HepG2 (cell line): ENCODE measurements at regions of chr5 and their contacts with region 1.

Region 1: GRCh38 chr5:180328296-180329137 is 24.6 kb downstream of the GFPT2 start:
- DNase-seq: peak; percentile 74
- ATAC-seq: peak; percentile 89
- H3K4me3 ChIP-seq: no peak overlapping the region
- H3K27ac ChIP-seq: no peak overlapping the region
- H3K4me1 ChIP-seq: 0 out of 2 replicates have a peak, but pooled peaks cover 8% of the 10 kb centered on the region
- H3K27me3 ChIP-seq: peaks cover 3 to 25% of the 10 kb centered on the region in 2 experiments; a peak in 4 of 5 replicates
- CTCF ChIP-seq: peak; percentile 91
- EP300 ChIP-seq: no peak
- POLR2A ChIP-seq: no peak
- RAD21 ChIP-seq: peak; percentile 61; the same call in 1 of the 2 replicates

Region 2: DNA sequence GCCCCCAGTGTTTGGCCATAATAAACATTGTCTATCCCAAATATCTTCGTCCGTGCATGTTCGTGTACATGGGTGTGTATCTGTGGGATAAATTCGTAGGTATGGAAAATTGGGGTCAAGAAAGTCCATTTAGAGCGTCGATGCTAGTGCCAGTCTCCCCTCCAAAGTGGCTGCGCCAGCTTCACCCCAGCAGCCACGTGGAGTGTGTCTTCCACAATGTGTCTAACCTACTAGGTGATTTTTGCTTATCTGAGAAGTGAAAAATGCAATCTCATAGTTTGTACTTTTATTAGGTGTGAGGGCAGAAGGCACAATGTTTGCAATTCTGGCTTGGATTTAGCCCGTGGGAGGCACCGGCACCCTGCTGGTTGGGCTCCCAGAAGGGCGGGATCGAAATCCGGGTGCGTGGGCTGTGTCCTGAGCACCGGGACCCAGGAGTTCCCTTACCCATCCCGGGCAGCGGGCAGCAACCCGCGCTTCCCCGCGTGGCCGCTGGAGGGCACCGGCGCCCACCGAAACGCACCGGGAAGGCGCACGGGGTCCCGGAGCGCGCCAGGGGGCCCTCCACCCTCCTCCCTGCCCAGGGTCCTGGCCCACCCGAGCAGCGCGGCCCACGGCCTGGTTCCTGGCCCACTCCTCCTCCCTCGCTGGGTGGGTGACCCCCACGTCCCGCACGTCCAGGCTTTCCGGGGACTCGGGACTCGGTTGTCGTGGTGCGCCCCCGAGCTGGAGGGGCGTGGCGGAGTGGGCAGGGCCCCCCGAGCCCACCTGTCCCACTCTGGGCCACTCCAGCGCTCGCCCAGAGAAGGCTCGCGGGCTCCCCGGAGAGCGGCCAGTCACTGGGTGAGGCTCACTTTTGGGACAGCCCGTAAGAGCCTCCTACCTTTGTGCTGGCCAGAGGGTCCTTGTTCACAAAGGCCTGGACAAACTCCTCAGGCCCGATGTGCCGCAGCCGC is 201.5 kb before region 1 on chr5:
- CTCF ChIA-PET with region 1: no interaction called
- POLR2A ChIA-PET with region 1: no interaction called
- in situ Hi-C with region 1: no loop called
- intact Hi-C with region 1: loop called (anchors 10 kb)
- DNase-seq: no peak
- ATAC-seq: peak; percentile 79
- H3K4me3 ChIP-seq: peak overlapping the region in 1 of 3 experiments; percentile 16; a peak in 1 of 6 replicates
- H3K27ac ChIP-seq: no peak overlapping the region
- H3K4me1 ChIP-seq: no peaks in the 10 kb centered on the region
- H3K27me3 ChIP-seq: peaks cover 8 to 56% of the 10 kb centered on the region in 2 experiments
- CTCF ChIP-seq: peak; percentile 91
- EP300 ChIP-seq: no peak
- POLR2A ChIP-seq: no peak
- RAD21 ChIP-seq: peak; percentile 82

Region 3: GRCh38 chr5:180201051-180201987 is 127.2 kb before region 1 on chr5:
- CTCF ChIA-PET with region 1: no interaction called
- POLR2A ChIA-PET with region 1: no interaction called
- in situ Hi-C with region 1: loop called (anchors 10 kb)
- intact Hi-C with region 1: loop called (anchors 5 kb)
- DNase-seq: peak; percentile 15
- ATAC-seq: peak; percentile 50; the same call in 2 of the 3 replicates
- H3K4me3 ChIP-seq: no peak overlapping the region
- H3K27ac ChIP-seq: no peak overlapping the region
- H3K4me1 ChIP-seq: no peaks in the 10 kb centered on the region
- H3K27me3 ChIP-seq: peaks cover 0 to 22% of the 10 kb centered on the region in 2 experiments; a peak in 3 of 5 replicates
- CTCF ChIP-seq: peak; percentile 77
- EP300 ChIP-seq: no peak
- POLR2A ChIP-seq: no peak
- RAD21 ChIP-seq: peak; percentile 25; the same call in 1 of the 2 replicates

Region 4: GRCh38 chr5:180209137-180209581 is 119.4 kb before region 1 on chr5 and contains the start of gene RASGEF1C:
- CTCF ChIA-PET with region 1: no interaction called
- POLR2A ChIA-PET with region 1: no interaction called
- in situ Hi-C with region 1: loop called (anchors 10 kb)
- intact Hi-C with region 1: loop called (anchors 5 kb)
- DNase-seq: peak; percentile 16
- ATAC-seq: peak; percentile 86
- H3K4me3 ChIP-seq: peak within 1 kb of the TSS; percentile 21 to 61 (median 50); a peak in 4 of 6 replicates
- H3K27ac ChIP-seq: no peak within 1 kb of the TSS
- H3K4me1 ChIP-seq: peaks cover 11% of the 10 kb centered on the region
- H3K27me3 ChIP-seq: peaks cover 0 to 22% of the 10 kb centered on the region in 2 experiments; a peak in 3 of 5 replicates
- CTCF ChIP-seq: peak; percentile 48; the same call in 1 of the 2 replicates
- EP300 ChIP-seq: no peak
- POLR2A ChIP-seq: no peak
- RAD21 ChIP-seq: peak; percentile 79
- total RNA-seq, gene RASGEF1C: not detected in 2 replicates

Region 5: DNA sequence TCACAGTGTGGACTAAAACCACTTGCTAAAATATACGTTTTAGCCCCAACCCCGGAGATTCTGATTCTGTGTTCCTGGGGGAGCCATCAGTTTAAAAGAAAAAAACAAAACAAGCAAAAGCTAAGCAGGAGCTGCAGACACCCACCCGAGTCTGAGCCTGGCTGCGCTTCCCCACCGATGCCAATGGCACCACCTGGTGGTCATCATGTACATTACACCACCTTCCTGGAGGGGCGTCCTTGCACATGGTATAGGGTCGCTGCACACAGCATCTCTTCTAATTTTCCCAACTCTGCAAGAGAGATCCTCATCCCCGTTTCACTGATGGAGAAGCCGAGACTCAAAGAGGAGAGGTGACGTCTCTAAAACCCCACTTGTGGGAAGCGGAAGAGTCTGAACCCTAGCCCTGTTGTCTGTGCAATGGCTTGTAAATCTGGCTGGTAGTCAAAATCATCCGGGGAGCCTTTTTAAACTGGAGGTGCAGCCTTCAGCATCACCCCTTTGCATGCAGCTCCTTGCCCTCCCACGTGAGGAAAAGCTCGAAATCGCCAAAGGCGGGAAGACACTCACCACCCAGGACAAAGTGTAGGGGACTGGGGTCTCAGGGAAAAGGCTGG is 142.6 kb after region 1 on chr5:
- CTCF ChIA-PET with region 1: no interaction called
- POLR2A ChIA-PET with region 1: no interaction called
- in situ Hi-C with region 1: no loop called
- intact Hi-C with region 1: no loop called
- DNase-seq: peak; percentile 25
- ATAC-seq: peak; percentile 77
- H3K4me3 ChIP-seq: no peak overlapping the region
- H3K27ac ChIP-seq: no peak overlapping the region
- H3K4me1 ChIP-seq: peaks cover 13% of the 10 kb centered on the region
- H3K27me3 ChIP-seq: peaks cover 3 to 31% of the 10 kb centered on the region in 2 experiments; a peak in 3 of 5 replicates
- CTCF ChIP-seq: peak; percentile 85
- EP300 ChIP-seq: no peak
- POLR2A ChIP-seq: no peak
- RAD21 ChIP-seq: peak; percentile 62

Region 6: GRCh38 chr5:180755601-180756000 is 427.1 kb after region 1 on chr5:
- CTCF ChIA-PET with region 1: no interaction called
- POLR2A ChIA-PET with region 1: no interaction called
- in situ Hi-C with region 1: no loop called
- intact Hi-C with region 1: no loop called
- DNase-seq: no peak
- ATAC-seq: no peak
- H3K4me3 ChIP-seq: no peak overlapping the region
- H3K27ac ChIP-seq: no peak overlapping the region
- H3K4me1 ChIP-seq: no peaks in the 10 kb centered on the region
- H3K27me3 ChIP-seq: peaks cover 0 to 2% of the 10 kb centered on the region in 2 experiments; a peak in 1 of 5 replicates
- CTCF ChIP-seq: no peak
- EP300 ChIP-seq: no peak
- POLR2A ChIP-seq: no peak
- RAD21 ChIP-seq: no peak